ENCODE measurements at regions of chr11 and their contacts with region 1.

Region 1: DNA sequence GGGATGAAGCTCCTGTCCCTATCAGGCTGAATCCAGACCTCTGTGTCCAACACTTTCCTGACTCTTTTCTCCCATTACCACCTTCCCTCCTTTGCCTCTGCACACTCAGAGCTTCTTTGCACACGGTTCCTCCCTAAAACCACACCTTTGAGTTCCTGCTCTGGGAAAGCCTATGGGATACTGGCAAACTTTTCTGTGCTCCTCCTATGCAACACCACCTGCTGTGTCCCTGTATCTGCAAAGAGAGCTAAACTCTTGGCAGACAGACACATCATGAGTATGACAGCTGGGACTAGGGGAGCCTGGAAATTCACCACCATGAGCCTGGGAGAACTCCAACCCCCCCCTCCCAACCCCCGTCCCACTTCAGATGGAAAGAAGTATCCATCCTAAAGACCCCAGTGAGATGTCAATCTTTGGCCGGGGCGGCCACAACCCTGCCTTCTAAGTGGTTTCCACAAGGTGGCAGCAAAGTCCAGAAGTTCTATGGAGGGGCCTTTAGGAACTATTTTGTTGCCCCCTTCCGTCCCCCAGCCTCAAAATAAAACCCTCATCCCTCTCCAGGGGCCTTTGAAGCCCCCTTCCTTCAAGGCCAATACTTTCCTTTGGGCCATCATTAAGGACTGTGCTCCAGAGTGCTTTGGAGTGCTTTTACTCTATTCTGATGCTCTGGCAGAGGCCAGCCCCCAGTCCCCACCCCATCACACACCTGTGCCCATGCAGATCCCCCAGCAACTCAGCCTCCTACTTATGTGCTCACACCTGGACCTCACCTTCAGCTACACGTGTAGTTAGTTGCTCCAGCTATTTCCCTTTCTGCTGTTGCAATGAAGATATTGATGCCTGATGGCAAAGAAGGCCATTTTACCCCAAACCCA is 19.4 kb downstream of the HTR3A start:
- DNase-seq: peak; percentile 66
- ATAC-seq: peak; percentile 66
- H3K4me3 ChIP-seq: no peak overlapping the region
- H3K4me3 Mint-ChIP-seq: no peak overlapping the region
- H3K27ac ChIP-seq: no peak overlapping the region
- H3K27ac Mint-ChIP-seq: no peak overlapping the region
- H3K4me1 ChIP-seq: peaks cover 7 to 20% of the 10 kb centered on the region in 2 donors
- H3K4me1 Mint-ChIP-seq: peaks cover 9% of the 10 kb centered on the region
- H3K27me3 ChIP-seq: peaks cover 0 to 3% (median 0%) of the 10 kb centered on the region in 4 experiments
- H3K27me3 Mint-ChIP-seq: peaks cover 8% of the 10 kb centered on the region
- CTCF ChIP-seq: peak; percentile 79

Region 2: DNA sequence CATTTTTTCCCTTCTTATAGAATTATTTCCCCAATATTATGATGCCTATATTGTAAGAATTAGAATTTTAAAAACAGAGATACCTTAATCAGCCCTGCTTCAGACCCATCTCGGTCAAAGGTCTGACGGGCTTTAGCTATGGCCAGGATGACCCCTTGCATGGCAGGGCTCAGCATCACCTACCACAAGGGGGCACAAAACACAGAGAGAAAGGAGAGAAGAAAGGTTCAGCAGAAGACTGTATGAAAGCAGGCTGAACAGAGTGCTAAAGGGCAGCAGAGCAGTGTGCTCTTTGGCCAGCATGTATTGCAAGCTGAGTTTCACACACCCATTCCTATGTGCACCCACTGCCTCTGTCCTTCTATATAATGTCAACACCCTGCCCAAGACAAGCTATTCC is 187.9 kb before region 1 on chr11:
- CTCF ChIA-PET with region 1: interaction called, 33 read pairs
- POLR2A ChIA-PET with region 1: no interaction called
- intact Hi-C with region 1: no loop called
- DNase-seq: peak; percentile 56
- ATAC-seq: peak; percentile 70
- H3K4me3 ChIP-seq: no peak overlapping the region
- H3K4me3 Mint-ChIP-seq: no peak overlapping the region
- H3K27ac ChIP-seq: no peak overlapping the region
- H3K27ac Mint-ChIP-seq: peak overlapping the region; percentile 77
- H3K4me1 ChIP-seq: no peaks in the 10 kb centered on the region
- H3K4me1 Mint-ChIP-seq: peaks cover 4% of the 10 kb centered on the region
- H3K27me3 ChIP-seq: no peaks in the 10 kb centered on the region
- H3K27me3 Mint-ChIP-seq: no peaks in the 10 kb centered on the region
- CTCF ChIP-seq: peak; percentile 58

Region 3: GRCh38 chr11:113934761-113935160 is 59.6 kb before region 1 on chr11:
- CTCF ChIA-PET with region 1: no interaction called
- POLR2A ChIA-PET with region 1: no interaction called
- intact Hi-C with region 1: no loop called
- DNase-seq: no peak
- ATAC-seq: no peak
- H3K4me3 ChIP-seq: no peak overlapping the region
- H3K4me3 Mint-ChIP-seq: no peak overlapping the region
- H3K27ac ChIP-seq: no peak overlapping the region
- H3K27ac Mint-ChIP-seq: no peak overlapping the region
- H3K4me1 ChIP-seq: peaks cover 0 to 3% of the 10 kb centered on the region in 2 donors
- H3K4me1 Mint-ChIP-seq: peaks cover 4% of the 10 kb centered on the region
- H3K27me3 ChIP-seq: peaks cover 0 to 3% (median 0%) of the 10 kb centered on the region in 4 experiments
- H3K27me3 Mint-ChIP-seq: peaks cover 3% of the 10 kb centered on the region
- CTCF ChIP-seq: no peak

Region 4: GRCh38 chr11:113980785-113981184 is 13.5 kb before region 1 on chr11:
- CTCF ChIA-PET with region 1: interaction called, 97 read pairs
- POLR2A ChIA-PET with region 1: interaction called, 4 read pairs
- intact Hi-C with region 1: loop called (anchors 1 kb)
- DNase-seq: peak; percentile 53
- ATAC-seq: no peak
- H3K4me3 ChIP-seq: peak overlapping the region in 2 of 5 experiments; percentile 4 to 28
- H3K4me3 Mint-ChIP-seq: peak overlapping the region; percentile 62
- H3K27ac ChIP-seq: no peak overlapping the region
- H3K27ac Mint-ChIP-seq: peak overlapping the region; percentile 7
- H3K4me1 ChIP-seq: peaks cover 57 to 66% of the 10 kb centered on the region in 2 donors
- H3K4me1 Mint-ChIP-seq: peaks cover 63% of the 10 kb centered on the region
- H3K27me3 ChIP-seq: no peaks in the 10 kb centered on the region
- H3K27me3 Mint-ChIP-seq: no peaks in the 10 kb centered on the region
- CTCF ChIP-seq: no peak

Region 5: GRCh38 chr11:114159802-114160632 is 165.7 kb after region 1 on chr11:
- CTCF ChIA-PET with region 1: interaction called, 20 read pairs
- POLR2A ChIA-PET with region 1: no interaction called
- intact Hi-C with region 1: no loop called
- DNase-seq: peak; percentile 98
- ATAC-seq: peak; percentile 93
- H3K4me3 ChIP-seq: peak overlapping the region; percentile 11 to 44 (median 24)
- H3K4me3 Mint-ChIP-seq: peak overlapping the region; percentile 73
- H3K27ac ChIP-seq: peak overlapping the region; percentile 81 to 85
- H3K27ac Mint-ChIP-seq: peak overlapping the region; percentile 90
- H3K4me1 ChIP-seq: peaks cover 68 to 69% of the 10 kb centered on the region in 2 donors
- H3K4me1 Mint-ChIP-seq: peaks cover 73% of the 10 kb centered on the region
- H3K27me3 ChIP-seq: no peaks in the 10 kb centered on the region
- H3K27me3 Mint-ChIP-seq: peaks cover 4% of the 10 kb centered on the region
- CTCF ChIP-seq: peak; percentile 33

Region 6: GRCh38 chr11:114187173-114187572 is 192.9 kb after region 1 on chr11:
- CTCF ChIA-PET with region 1: interaction called, 5 read pairs
- POLR2A ChIA-PET with region 1: no interaction called
- intact Hi-C with region 1: loop called (anchors 5 kb)
- DNase-seq: peak; percentile 84
- ATAC-seq: peak; percentile 82
- H3K4me3 ChIP-seq: peak overlapping the region in 2 of 5 experiments; percentile 10 to 17
- H3K4me3 Mint-ChIP-seq: peak overlapping the region; percentile 77
- H3K27ac ChIP-seq: peak overlapping the region; percentile 92 to 98
- H3K27ac Mint-ChIP-seq: peak overlapping the region; percentile 98
- H3K4me1 ChIP-seq: peaks cover 67 to 74% of the 10 kb centered on the region in 2 donors
- H3K4me1 Mint-ChIP-seq: peaks cover 73% of the 10 kb centered on the region
- H3K27me3 ChIP-seq: no peaks in the 10 kb centered on the region
- H3K27me3 Mint-ChIP-seq: no peaks in the 10 kb centered on the region
- CTCF ChIP-seq: no peak

Region 7: GRCh38 chr11:114257621-114258558 is 263.6 kb after region 1 on chr11:
- CTCF ChIA-PET with region 1: interaction called, 592 read pairs
- POLR2A ChIA-PET with region 1: interaction called, 17 read pairs
- intact Hi-C with region 1: loop called (anchors 1 kb)
- DNase-seq: no peak
- ATAC-seq: no peak
- H3K4me3 ChIP-seq: no peak overlapping the region
- H3K4me3 Mint-ChIP-seq: no peak overlapping the region
- H3K27ac ChIP-seq: peak overlapping the region; percentile 84 to 89
- H3K27ac Mint-ChIP-seq: peak overlapping the region; percentile 88
- H3K4me1 ChIP-seq: peaks cover 30 to 34% of the 10 kb centered on the region in 2 donors
- H3K4me1 Mint-ChIP-seq: peaks cover 32% of the 10 kb centered on the region
- H3K27me3 ChIP-seq: peaks cover 0 to 1% (median 0%) of the 10 kb centered on the region in 4 experiments
- H3K27me3 Mint-ChIP-seq: no peaks in the 10 kb centered on the region
- CTCF ChIP-seq: no peak

Measured in B cell (primary cell).